Activated CD4-positive, alpha-beta memory T cell treated with anti-CD3 and anti-CD28 coated beads for 36 hours (primary cell): ENCODE measurements at regions of chr2 and their contacts with region 1.

Region 1: DNA sequence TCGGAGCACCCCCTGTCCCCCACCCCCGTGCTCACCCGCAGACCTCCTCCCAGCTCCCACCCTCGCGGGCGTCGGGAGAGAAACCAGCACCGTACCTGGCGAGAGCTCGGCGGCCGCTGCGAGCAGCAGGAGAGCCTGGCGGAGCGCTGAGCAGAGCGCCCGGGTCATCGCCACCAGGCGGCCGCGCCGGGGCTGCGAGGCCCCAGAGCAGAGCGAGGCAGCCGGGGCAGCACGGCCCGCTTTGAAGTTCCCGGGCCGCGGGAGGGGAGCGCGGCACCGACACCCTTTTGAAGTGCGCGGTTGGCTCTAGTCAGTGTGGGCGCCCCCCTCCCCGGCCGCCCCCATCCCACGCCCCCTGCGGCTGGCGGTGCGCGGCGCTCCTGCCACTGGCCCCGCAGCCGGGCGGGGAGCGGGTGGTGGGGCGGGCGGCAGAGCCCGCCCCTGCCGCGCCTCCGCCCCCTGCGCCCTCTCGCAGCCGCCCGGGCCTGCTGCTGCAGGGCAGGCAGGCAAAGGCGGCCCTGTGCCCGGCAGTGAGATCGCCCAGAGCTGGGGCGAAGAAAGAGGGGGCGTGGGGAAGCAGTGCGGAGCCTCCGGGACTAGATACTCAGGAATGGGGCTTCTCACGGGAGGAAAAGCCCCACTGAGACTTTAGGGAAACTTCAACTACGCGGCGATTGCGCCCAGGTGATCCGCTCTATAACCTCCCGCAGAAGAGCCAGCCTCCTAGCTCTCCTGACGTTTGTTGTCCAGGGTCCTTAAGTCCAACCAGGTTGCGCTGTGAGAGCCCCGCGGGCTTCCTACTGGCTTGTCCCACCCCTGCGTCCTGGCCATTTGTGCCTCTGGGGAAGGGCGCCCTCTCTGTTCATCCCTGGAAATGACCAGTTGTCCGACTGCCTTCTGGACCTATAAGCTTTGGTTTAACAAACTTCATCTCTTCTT is at the start of gene ACVR1C:
- DNase-seq: peak; percentile 79
- H3K4me3 Mint-ChIP-seq: peak within 1 kb of the TSS; percentile 86
- H3K27ac Mint-ChIP-seq: peak within 1 kb of the TSS; percentile 9
- H3K4me1 Mint-ChIP-seq: peaks cover 31% of the 10 kb centered on the region
- H3K27me3 Mint-ChIP-seq: peaks cover 8% of the 10 kb centered on the region
- total RNA-seq, gene ACVR1C: 1.3 to 2.0 TPM

Region 2: DNA sequence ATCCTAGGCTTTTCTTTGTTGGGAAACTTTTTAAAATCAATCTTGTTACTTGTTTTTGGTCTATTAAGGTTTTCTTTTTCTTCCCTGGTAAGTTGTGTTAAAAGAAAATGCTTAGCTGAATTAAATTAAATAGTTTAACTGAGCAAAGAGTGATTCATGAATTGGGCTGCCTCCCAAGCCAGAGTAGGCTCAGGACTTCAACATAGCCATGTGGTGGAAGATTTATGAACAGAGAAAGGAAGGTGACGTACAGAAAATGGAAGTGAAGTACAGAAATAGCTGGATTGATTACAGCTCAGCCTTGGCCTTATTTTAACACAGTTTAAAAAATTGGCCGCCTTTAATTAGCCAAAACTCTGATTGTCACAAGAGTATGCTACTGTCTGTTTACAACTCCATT is 399.2 kb before region 1 on chr2:
- CTCF ChIA-PET with region 1: no interaction called
- POLR2A ChIA-PET with region 1: no interaction called
- intact Hi-C with region 1: no loop called
- DNase-seq: no peak
- H3K4me3 Mint-ChIP-seq: no peak overlapping the region
- H3K27ac Mint-ChIP-seq: no peak overlapping the region
- H3K4me1 Mint-ChIP-seq: no peaks in the 10 kb centered on the region
- H3K27me3 Mint-ChIP-seq: peaks cover 11% of the 10 kb centered on the region

Region 3: GRCh38 chr2:157420771-157421323 is 207.9 kb before region 1 on chr2:
- CTCF ChIA-PET with region 1: no interaction called
- POLR2A ChIA-PET with region 1: no interaction called
- intact Hi-C with region 1: loop called (anchors 5 kb)
- DNase-seq: peak; percentile 61
- H3K4me3 Mint-ChIP-seq: peak overlapping the region; percentile 38
- H3K27ac Mint-ChIP-seq: peak overlapping the region; percentile 97
- H3K4me1 Mint-ChIP-seq: peaks cover 74% of the 10 kb centered on the region
- H3K27me3 Mint-ChIP-seq: no peaks in the 10 kb centered on the region

Region 4: GRCh38 chr2:157497638-157498314 is 131.0 kb before region 1 on chr2:
- CTCF ChIA-PET with region 1: interaction called, 22 read pairs
- POLR2A ChIA-PET with region 1: no interaction called
- intact Hi-C with region 1: loop called (anchors 2 kb)
- DNase-seq: no peak
- H3K4me3 Mint-ChIP-seq: no peak overlapping the region
- H3K27ac Mint-ChIP-seq: no peak overlapping the region
- H3K4me1 Mint-ChIP-seq: peaks cover 9% of the 10 kb centered on the region
- H3K27me3 Mint-ChIP-seq: no peaks in the 10 kb centered on the region

Region 5: DNA sequence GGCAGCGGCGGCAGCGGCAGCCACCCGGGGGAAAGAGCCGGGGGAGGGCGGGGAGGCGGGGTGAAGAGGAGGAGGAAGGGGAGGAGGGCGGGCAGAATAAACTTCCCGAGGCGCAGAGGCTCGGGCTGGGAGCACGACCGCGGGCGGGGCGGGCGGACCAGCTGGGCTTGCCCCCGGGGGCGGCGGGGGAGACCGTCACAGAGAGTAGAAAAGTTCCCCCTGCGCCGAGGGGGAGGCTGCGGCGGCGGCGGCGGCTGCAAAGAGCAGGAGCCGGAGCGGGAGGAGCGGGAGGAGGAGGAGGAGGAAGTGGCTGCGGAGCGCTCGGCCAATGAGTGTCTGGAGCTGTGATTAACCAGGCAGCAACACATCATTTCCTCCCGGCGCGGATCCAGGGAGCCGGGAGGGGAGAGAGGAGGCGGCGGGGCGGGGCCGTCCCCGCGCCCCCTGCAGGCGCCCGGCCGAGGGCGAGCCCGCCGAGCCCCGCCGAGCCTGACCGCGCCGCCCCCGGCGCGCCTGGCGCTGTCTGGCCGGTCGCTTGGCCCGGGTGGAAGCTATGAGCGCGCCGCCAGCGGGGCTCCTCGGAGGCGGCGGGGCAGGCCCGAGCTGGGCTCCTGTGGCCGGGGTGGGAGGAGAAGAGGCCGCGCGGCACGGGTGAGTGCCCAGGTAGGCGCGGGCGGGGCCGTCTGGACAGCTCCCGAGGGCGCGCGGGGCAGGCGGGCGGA is 247.5 kb after region 1 on chr2 and contains the start of gene ACVR1:
- CTCF ChIA-PET with region 1: no interaction called
- POLR2A ChIA-PET with region 1: interaction called, 3 read pairs
- intact Hi-C with region 1: loop called (anchors 5 kb)
- DNase-seq: peak; percentile 92
- H3K4me3 Mint-ChIP-seq: peak within 1 kb of the TSS; percentile 89
- H3K27ac Mint-ChIP-seq: peak within 1 kb of the TSS; percentile 88
- H3K4me1 Mint-ChIP-seq: peaks cover 56% of the 10 kb centered on the region
- H3K27me3 Mint-ChIP-seq: no peaks in the 10 kb centered on the region
- total RNA-seq, gene ACVR1: 24.8 to 25.0 TPM

Region 6: DNA sequence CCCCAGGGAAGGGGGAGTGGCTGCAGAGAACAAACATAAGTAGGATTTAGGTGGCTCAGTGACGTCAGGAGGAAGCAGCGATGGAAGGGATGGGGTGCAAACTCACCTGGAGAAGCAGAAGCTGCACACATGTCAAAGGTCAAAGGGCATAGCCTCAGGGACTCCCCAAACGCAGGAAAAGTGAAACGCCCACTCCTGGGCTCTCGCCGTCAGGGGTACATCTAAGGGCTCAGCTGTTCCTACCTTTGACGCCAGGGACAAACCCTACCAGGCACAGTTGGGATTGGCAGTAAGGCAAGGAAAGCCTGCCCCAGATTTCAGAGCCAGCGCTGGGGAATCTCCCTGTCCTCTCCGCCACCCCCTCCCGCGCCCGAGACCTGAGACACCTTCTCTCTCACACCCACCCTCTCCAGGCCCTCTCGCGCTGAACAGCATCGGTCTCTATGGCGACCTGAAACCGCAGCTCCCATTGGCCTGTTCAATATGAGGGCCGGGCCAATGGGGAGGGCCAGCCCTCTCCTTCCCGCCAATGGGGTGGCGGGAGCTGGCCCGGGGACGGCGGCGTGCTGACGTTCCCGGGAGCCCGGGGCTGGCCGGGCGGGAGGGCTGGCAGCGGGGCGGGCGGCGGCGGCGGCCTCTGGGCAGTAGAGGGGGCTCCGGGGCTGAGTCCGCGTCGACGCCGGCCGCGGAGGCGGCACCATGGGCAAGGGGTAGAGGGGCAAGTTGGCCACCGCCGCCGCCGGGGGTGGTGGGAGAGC is 827.7 kb after region 1 on chr2 and contains the starts of genes CCDC148 and PKP4:
- CTCF ChIA-PET with region 1: no interaction called
- POLR2A ChIA-PET with region 1: no interaction called
- intact Hi-C with region 1: loop called (anchors 5 kb)
- DNase-seq: peak; percentile 94
- H3K4me3 Mint-ChIP-seq: peak within 1 kb of the TSS; percentile 93
- H3K27ac Mint-ChIP-seq: peak within 1 kb of the TSS; percentile 72
- H3K4me1 Mint-ChIP-seq: peaks cover 28% of the 10 kb centered on the region
- H3K27me3 Mint-ChIP-seq: no peaks in the 10 kb centered on the region
- total RNA-seq, gene CCDC148: 0.29 TPM in 1 of 2 experiments, not detected in the other
- total RNA-seq, gene PKP4: 41.4 to 43.1 TPM